Activated CD8-positive, alpha-beta T cell treated with anti-CD3 and anti-CD28 coated beads for 36 hours (primary cell): ENCODE measurements at regions of chr20 and their contacts with region 1.

Region 1: GRCh38 chr20:32652739-32653526 is 20.8 kb downstream of the C20orf203 start:
- DNase-seq: peak; percentile 90
- ATAC-seq: peak; percentile 98
- H3K4me3 Mint-ChIP-seq: no peak overlapping the region
- H3K27ac Mint-ChIP-seq: no peak overlapping the region
- H3K4me1 Mint-ChIP-seq: peaks cover 7% of the 10 kb centered on the region
- H3K27me3 Mint-ChIP-seq: no peaks in the 10 kb centered on the region
- CTCF ChIP-seq: peak; percentile 95

Region 2: GRCh38 chr20:32509639-32510066 is 143.3 kb before region 1 on chr20:
- CTCF ChIA-PET with region 1: interaction called, 13 read pairs
- POLR2A ChIA-PET with region 1: interaction called, 4 read pairs
- intact Hi-C with region 1: no loop called
- DNase-seq: peak; percentile 91
- ATAC-seq: peak; percentile 70
- H3K4me3 Mint-ChIP-seq: peak overlapping the region; percentile 79
- H3K27ac Mint-ChIP-seq: peak overlapping the region; percentile 93
- H3K4me1 Mint-ChIP-seq: peaks cover 87% of the 10 kb centered on the region
- H3K27me3 Mint-ChIP-seq: no peaks in the 10 kb centered on the region
- CTCF ChIP-seq: no peak

Region 3: GRCh38 chr20:32515631-32516101 is 137.3 kb before region 1 on chr20:
- CTCF ChIA-PET with region 1: interaction called, 256 read pairs
- POLR2A ChIA-PET with region 1: interaction called, 4 read pairs
- intact Hi-C with region 1: no loop called
- DNase-seq: no peak
- ATAC-seq: no peak
- H3K4me3 Mint-ChIP-seq: no peak overlapping the region
- H3K27ac Mint-ChIP-seq: peak overlapping the region; percentile 60
- H3K4me1 Mint-ChIP-seq: peaks cover 61% of the 10 kb centered on the region
- H3K27me3 Mint-ChIP-seq: no peaks in the 10 kb centered on the region
- CTCF ChIP-seq: no peak

Region 4: DNA sequence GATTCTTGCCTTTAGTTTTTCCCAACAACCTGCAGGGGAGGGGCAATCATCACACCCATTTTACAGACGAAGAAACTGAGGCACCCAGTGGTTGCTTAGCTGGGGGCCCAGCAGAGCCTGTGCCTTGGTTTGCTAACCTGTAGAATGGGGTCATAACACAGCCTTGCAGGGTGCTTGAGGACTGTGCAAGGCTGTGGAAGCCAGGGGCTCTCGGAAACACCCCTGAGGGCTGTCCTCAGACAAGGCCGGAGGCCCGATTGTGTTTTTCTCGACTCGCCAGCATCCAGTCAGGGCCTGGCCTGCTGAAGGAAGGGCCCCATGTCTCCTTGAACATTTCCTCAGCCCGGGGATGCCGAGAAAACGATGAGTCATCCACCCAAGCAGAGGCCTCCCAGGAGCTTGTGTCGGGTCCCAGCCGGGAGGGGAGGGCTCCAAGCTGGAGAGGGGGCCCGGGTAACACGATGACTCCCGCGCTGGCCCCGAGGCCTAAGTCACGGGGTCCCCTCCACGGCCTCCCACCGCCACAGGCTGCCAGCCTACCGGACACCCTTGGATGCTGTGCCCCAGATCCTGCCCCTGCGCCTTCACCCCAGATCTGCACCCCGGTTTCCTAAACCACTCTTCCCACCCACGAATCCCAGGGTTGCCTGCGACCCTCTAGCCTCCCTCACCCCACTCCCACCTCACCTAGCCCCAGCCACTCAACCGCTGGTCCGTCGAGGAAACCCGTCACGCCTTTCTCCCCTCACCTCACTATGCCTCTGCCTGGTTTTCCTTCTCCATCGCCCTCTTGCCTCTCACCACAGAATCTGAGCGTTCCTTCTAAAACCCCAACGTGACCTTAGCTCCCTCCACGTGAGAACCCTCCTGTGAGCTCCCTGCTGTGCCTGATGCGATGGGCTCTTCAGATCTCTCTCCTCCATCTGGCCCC is 78.4 kb before region 1 on chr20:
- CTCF ChIA-PET with region 1: interaction called, 11 read pairs
- POLR2A ChIA-PET with region 1: no interaction called
- intact Hi-C with region 1: no loop called
- DNase-seq: peak; percentile 65
- ATAC-seq: peak; percentile 68
- H3K4me3 Mint-ChIP-seq: no peak overlapping the region
- H3K27ac Mint-ChIP-seq: no peak overlapping the region
- H3K4me1 Mint-ChIP-seq: peaks cover 46% of the 10 kb centered on the region
- H3K27me3 Mint-ChIP-seq: no peaks in the 10 kb centered on the region
- CTCF ChIP-seq: no peak

Region 5: GRCh38 chr20:32610472-32611218 is 42.3 kb before region 1 on chr20:
- CTCF ChIA-PET with region 1: interaction called, 10 read pairs
- POLR2A ChIA-PET with region 1: no interaction called
- intact Hi-C with region 1: no loop called
- DNase-seq: no peak
- ATAC-seq: no peak
- H3K4me3 Mint-ChIP-seq: no peak overlapping the region
- H3K27ac Mint-ChIP-seq: no peak overlapping the region
- H3K4me1 Mint-ChIP-seq: no peaks in the 10 kb centered on the region
- H3K27me3 Mint-ChIP-seq: no peaks in the 10 kb centered on the region
- CTCF ChIP-seq: no peak

Region 6: GRCh38 chr20:32709632-32710121 is 56.7 kb after region 1 on chr20:
- CTCF ChIA-PET with region 1: no interaction called
- POLR2A ChIA-PET with region 1: no interaction called
- intact Hi-C with region 1: no loop called
- DNase-seq: no peak
- ATAC-seq: no peak
- H3K4me3 Mint-ChIP-seq: no peak overlapping the region
- H3K27ac Mint-ChIP-seq: no peak overlapping the region
- H3K4me1 Mint-ChIP-seq: peaks cover 16% of the 10 kb centered on the region
- H3K27me3 Mint-ChIP-seq: no peaks in the 10 kb centered on the region
- CTCF ChIP-seq: no peak

Region 7: DNA sequence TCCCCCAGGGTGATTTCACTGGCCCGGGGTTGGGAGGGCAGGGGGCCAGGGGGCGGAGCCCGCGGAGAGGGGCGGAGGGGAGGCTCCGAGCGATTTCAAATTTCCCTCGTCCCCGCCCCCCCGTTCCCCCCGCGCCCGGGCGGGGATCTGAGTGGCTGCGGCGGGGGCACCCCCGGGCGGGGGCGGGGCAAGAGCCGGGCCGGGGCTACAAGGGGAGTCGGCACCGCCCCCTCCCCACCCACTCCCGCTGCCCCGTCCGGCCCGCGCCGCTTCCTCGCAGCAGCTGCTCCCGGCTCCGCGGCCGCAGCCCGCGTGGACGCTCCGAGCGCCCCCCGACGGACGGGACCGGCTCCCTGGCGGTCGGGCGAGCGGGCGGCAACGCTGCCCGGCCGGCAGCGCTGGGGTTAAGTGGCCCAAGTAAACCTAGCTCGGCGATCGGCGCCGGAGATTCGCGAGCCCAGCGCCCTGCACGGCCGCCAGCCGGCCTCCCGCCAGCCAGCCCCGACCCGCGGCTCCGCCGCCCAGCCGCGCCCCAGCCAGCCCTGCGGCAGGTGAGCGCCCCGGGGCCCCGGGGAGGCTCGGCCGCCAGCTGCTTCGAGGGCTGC is 109.3 kb after region 1 on chr20 and contains the start of gene DNMT3B:
- CTCF ChIA-PET with region 1: no interaction called
- POLR2A ChIA-PET with region 1: no interaction called
- intact Hi-C with region 1: no loop called
- DNase-seq: peak; percentile 84
- ATAC-seq: peak; percentile 80
- H3K4me3 Mint-ChIP-seq: peak within 1 kb of the TSS; percentile 75
- H3K27ac Mint-ChIP-seq: peak within 1 kb of the TSS; percentile 70
- H3K4me1 Mint-ChIP-seq: peaks cover 8% of the 10 kb centered on the region
- H3K27me3 Mint-ChIP-seq: peaks cover 3% of the 10 kb centered on the region
- CTCF ChIP-seq: peak; percentile 27
- total RNA-seq, gene DNMT3B: 2.9 TPM